ENCODE measurements at regions of chr17 and their contacts with region 1.

Region 1: DNA sequence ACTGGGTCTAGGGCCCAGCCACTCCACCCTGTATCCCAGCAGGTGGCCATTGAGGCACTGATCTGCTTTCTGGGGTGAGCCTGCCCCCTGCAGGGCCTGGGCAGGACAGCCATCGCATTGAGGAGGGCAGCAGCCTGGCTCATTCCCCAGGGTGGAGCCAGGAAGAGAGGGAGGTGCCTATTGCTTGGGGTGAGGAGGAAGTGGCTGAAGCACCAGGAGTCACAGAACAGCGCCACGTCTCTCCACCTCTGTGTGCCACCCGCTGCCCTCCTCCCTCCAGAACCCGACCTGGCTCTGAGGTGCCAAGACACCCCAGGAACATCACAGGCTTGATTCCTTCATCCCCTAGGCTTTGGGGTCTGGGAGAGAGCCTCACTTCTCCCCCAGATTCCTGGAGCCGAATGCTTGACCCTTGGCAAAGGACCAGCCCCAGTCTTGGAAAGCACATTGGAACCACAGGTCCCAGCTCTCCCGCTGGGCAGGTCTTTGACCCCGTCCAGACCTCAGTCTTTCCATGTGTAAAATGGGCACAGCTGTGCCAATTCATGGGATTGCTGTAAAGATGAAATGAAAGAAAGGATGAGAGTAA is 7.2 kb upstream of the KRT36 start:
- DNase-seq: peak; percentile 51
- H3K4me3 ChIP-seq: no peak overlapping the region
- H3K27me3 ChIP-seq: no peaks in the 10 kb centered on the region
- CTCF ChIP-seq: peak; percentile 91

Region 2: DNA sequence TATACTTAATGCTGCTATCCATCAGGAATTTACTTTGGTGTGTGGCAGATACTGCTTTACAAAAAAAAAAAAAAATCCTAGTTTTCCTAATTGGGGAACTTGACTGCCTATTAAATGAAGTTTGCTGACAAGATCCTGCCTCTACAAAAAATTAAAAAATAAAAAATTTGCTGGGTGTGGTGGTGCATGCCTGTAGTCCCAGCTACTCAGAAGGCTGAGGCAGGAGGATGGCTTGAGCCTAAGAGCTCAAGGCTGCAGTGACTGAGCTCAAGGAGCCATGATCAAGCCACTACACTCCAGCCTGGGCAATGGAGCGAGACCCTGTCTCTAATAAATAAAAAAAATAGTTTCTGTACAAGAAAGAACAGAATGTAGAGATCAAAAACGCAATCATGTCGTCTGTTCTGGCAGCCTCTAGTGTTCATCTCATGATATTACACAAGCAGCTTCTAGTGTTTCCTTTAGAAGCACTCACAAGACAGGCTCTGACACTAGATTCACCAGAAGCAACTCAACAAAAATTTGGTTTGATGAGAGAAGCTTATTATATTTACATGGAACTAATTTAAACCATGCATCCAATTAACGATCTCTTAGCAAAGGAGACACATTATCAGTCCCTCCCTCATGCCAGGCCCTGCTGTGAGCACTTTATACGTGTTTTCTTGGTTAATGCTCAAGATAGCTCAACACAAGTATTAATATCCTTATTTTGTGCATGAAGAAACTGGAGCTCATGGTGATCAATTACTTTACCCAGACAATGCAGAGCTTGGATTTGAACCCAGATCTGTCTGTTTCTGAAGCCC is 174.6 kb before region 1 on chr17:
- CTCF ChIA-PET with region 1: interaction called, 17 read pairs
- POLR2A ChIA-PET with region 1: no interaction called
- DNase-seq: peak; percentile 38
- H3K4me3 ChIP-seq: no peak overlapping the region
- H3K27me3 ChIP-seq: no peaks in the 10 kb centered on the region
- CTCF ChIP-seq: peak; percentile 91

Region 3: DNA sequence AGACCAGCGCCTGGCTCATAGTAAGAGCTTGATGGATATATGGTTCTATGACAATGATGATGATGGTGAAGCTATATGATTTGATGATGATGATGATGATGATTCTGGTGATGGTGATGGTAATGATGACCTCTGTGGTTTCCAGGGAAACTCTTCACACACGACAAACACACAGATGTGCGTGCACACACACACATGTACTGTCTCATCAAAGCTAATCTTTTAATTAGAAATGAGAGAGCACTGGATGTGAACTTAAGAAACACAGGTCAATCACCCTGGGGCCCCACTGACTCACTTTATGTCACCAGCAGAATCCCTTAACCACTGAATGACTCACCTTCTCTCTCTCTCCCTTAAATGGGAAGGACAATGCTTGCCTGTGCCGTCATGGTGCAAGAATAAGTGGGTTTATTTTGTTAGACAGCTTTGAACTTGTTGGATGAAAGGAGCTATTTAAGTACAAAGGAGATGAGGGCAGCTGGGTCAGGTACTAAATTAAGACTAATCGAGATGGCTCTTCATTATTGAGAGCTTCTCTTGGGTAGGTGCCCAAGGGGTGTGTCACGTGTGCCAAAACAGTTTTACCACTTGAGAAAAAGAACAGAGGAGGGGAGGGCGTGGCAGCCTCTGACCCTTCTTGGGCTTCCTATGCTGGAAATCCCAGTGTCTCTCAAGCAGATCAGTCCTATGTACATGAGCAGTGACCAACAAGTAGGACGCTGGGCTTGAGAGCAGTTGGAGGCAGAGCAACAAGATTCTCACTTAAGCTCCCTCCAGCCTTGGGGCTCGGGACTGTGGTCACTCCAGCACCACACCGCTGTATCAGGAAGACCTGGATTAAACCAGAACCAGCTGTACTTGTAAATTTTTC is 92.9 kb before region 1 on chr17:
- CTCF ChIA-PET with region 1: interaction called, 35 read pairs
- POLR2A ChIA-PET with region 1: no interaction called
- DNase-seq: peak; percentile 94
- H3K4me3 ChIP-seq: no peak overlapping the region
- H3K27me3 ChIP-seq: no peaks in the 10 kb centered on the region
- CTCF ChIP-seq: no peak

Region 4: DNA sequence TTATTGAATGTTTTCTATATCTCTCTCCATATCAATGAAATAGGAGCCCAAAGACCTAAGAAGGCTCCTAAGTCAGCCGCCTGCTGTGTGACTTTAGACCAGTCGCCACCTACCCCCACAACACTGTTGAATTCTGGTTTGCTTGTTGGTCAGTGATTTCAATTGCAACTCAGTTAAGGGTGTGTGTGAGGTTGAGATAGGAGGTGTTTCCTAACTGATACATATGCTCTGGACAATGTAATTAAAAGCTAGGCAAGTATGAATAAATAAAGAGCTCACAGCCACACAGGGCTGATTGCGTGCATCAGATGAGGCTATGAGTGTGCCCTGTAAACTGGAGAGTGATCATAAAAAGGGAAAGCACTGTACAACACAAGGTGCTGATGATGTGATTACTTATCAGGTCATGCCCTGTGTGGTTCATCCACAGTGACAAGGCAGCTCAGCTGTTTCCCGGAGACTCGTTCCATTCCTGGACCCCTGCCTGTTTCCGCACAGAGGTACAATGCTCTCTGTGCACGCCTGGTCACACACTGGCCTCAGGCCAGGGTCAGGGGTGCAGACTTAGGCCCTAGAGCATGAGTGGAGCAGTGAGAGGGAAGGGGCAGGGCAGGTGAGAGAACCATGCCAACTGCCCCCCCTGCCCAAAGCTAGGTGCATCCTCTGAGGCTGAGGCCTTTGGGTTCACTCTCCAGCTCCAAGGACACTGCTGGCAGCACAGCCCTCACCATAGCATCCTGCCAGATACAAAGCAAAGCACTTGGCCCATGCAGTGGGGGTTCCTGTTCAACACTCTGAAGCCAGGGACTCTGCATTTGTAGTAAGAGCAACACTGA is 12.7 kb before region 1 on chr17:
- CTCF ChIA-PET with region 1: interaction called, 17 read pairs
- POLR2A ChIA-PET with region 1: no interaction called
- DNase-seq: no peak
- H3K4me3 ChIP-seq: no peak overlapping the region
- H3K27me3 ChIP-seq: no peaks in the 10 kb centered on the region
- CTCF ChIP-seq: no peak